ENCODE measurements at regions of chr4 and their contacts with region 1.

Region 1: GRCh38 chr4:76179398-76180318 is 31.5 kb upstream of the NUP54 start:
- DNase-seq: no peak
- ATAC-seq: peak; percentile 99
- H3K4me3 ChIP-seq: no peak overlapping the region
- H3K27ac ChIP-seq: no peak overlapping the region
- H3K4me1 ChIP-seq: no peaks in the 10 kb centered on the region
- H3K27me3 ChIP-seq: no peaks in the 10 kb centered on the region
- CTCF ChIP-seq: peak; percentile 86 to 91 (median 86)
- EP300 ChIP-seq: no peak
- POLR2A ChIP-seq: no peak
- RAD21 ChIP-seq: peak; percentile 97

Region 2: GRCh38 chr4:75831856-75832405 is 347.7 kb before region 1 on chr4:
- CTCF ChIA-PET with region 1: no interaction called
- POLR2A ChIA-PET with region 1: no interaction called
- RAD21 ChIA-PET with region 1: no interaction called
- SMC1A ChIA-PET with region 1: no interaction called
- in situ Hi-C with region 1: no loop called
- intact Hi-C with region 1: no loop called
- DNase-seq: no peak
- ATAC-seq: no peak
- H3K4me3 ChIP-seq: no peak overlapping the region
- H3K27ac ChIP-seq: no peak overlapping the region
- H3K4me1 ChIP-seq: no peaks in the 10 kb centered on the region
- H3K27me3 ChIP-seq: no peaks in the 10 kb centered on the region
- CTCF ChIP-seq: no peak
- EP300 ChIP-seq: no peak
- POLR2A ChIP-seq: no peak
- RAD21 ChIP-seq: no peak

Region 3: GRCh38 chr4:76166480-76166879 is 13.2 kb before region 1 on chr4:
- CTCF ChIA-PET with region 1: interaction called, 12 read pairs
- POLR2A ChIA-PET with region 1: no interaction called
- RAD21 ChIA-PET with region 1: no interaction called
- SMC1A ChIA-PET with region 1: interaction called, 3 read pairs
- in situ Hi-C with region 1: no loop called
- intact Hi-C with region 1: no loop called
- DNase-seq: no peak
- ATAC-seq: no peak
- H3K4me3 ChIP-seq: no peak overlapping the region
- H3K27ac ChIP-seq: no peak overlapping the region
- H3K4me1 ChIP-seq: no peaks in the 10 kb centered on the region
- H3K27me3 ChIP-seq: no peaks in the 10 kb centered on the region
- CTCF ChIP-seq: no peak
- EP300 ChIP-seq: no peak
- POLR2A ChIP-seq: no peak
- RAD21 ChIP-seq: no peak

Region 4: GRCh38 chr4:76208005-76208765 is 28.5 kb after region 1 on chr4:
- CTCF ChIA-PET with region 1: interaction called, 38 read pairs
- POLR2A ChIA-PET with region 1: no interaction called
- RAD21 ChIA-PET with region 1: interaction called, 4 read pairs
- SMC1A ChIA-PET with region 1: interaction called, 25 read pairs
- in situ Hi-C with region 1: no loop called
- intact Hi-C with region 1: no loop called
- DNase-seq: no peak
- ATAC-seq: no peak
- H3K4me3 ChIP-seq: no peak overlapping the region
- H3K27ac ChIP-seq: no peak overlapping the region
- H3K4me1 ChIP-seq: peaks cover 23% of the 10 kb centered on the region
- H3K27me3 ChIP-seq: no peaks in the 10 kb centered on the region
- CTCF ChIP-seq: no peak
- EP300 ChIP-seq: no peak
- POLR2A ChIP-seq: no peak
- RAD21 ChIP-seq: no peak

Region 5: GRCh38 chr4:76256032-76256431 is 76.4 kb after region 1 on chr4:
- CTCF ChIA-PET with region 1: interaction called, 12 read pairs
- POLR2A ChIA-PET with region 1: no interaction called
- RAD21 ChIA-PET with region 1: no interaction called
- SMC1A ChIA-PET with region 1: interaction called, 5 read pairs
- in situ Hi-C with region 1: no loop called
- intact Hi-C with region 1: no loop called
- DNase-seq: no peak
- ATAC-seq: no peak
- H3K4me3 ChIP-seq: no peak overlapping the region
- H3K27ac ChIP-seq: no peak overlapping the region
- H3K4me1 ChIP-seq: no peaks in the 10 kb centered on the region
- H3K27me3 ChIP-seq: peaks cover 2% of the 10 kb centered on the region in 2 experiments
- CTCF ChIP-seq: no peak
- EP300 ChIP-seq: no peak
- POLR2A ChIP-seq: no peak
- RAD21 ChIP-seq: no peak

Region 6: GRCh38 chr4:76430519-76431388 is 251.1 kb after region 1 on chr4:
- CTCF ChIA-PET with region 1: interaction called, 25 read pairs
- POLR2A ChIA-PET with region 1: no interaction called
- RAD21 ChIA-PET with region 1: interaction called, 11 read pairs
- SMC1A ChIA-PET with region 1: interaction called, 3 read pairs
- in situ Hi-C with region 1: no loop called
- intact Hi-C with region 1: loop called (anchors 5 kb)
- DNase-seq: no peak
- ATAC-seq: peak; percentile 77
- H3K4me3 ChIP-seq: no peak overlapping the region
- H3K27ac ChIP-seq: no peak overlapping the region
- H3K4me1 ChIP-seq: no peaks in the 10 kb centered on the region
- H3K27me3 ChIP-seq: peaks cover 0 to 4% of the 10 kb centered on the region in 2 experiments; a peak in 2 of 4 replicates
- CTCF ChIP-seq: peak; percentile 53 to 54 (median 53)
- EP300 ChIP-seq: no peak
- POLR2A ChIP-seq: no peak
- RAD21 ChIP-seq: peak; percentile 77

Region 7: GRCh38 chr4:76748649-76749048 is 569.0 kb after region 1 on chr4:
- CTCF ChIA-PET with region 1: interaction called, 4 read pairs
- POLR2A ChIA-PET with region 1: no interaction called
- RAD21 ChIA-PET with region 1: no interaction called
- SMC1A ChIA-PET with region 1: no interaction called
- in situ Hi-C with region 1: no loop called
- intact Hi-C with region 1: loop called (anchors 10 kb)
- DNase-seq: no peak
- ATAC-seq: peak; percentile 73
- H3K4me3 ChIP-seq: no peak overlapping the region
- H3K27ac ChIP-seq: no peak overlapping the region
- H3K4me1 ChIP-seq: no peaks in the 10 kb centered on the region
- H3K27me3 ChIP-seq: no peaks in the 10 kb centered on the region
- CTCF ChIP-seq: peak; percentile 34 to 57 (median 54); a peak in 5 of 6 replicates
- EP300 ChIP-seq: no peak
- POLR2A ChIP-seq: no peak
- RAD21 ChIP-seq: peak; percentile 85

Measured in GM12878 (cell line).